HEK293 (cell line): ENCODE measurements at regions of chr2 and their contacts with region 1.

Region 1: DNA sequence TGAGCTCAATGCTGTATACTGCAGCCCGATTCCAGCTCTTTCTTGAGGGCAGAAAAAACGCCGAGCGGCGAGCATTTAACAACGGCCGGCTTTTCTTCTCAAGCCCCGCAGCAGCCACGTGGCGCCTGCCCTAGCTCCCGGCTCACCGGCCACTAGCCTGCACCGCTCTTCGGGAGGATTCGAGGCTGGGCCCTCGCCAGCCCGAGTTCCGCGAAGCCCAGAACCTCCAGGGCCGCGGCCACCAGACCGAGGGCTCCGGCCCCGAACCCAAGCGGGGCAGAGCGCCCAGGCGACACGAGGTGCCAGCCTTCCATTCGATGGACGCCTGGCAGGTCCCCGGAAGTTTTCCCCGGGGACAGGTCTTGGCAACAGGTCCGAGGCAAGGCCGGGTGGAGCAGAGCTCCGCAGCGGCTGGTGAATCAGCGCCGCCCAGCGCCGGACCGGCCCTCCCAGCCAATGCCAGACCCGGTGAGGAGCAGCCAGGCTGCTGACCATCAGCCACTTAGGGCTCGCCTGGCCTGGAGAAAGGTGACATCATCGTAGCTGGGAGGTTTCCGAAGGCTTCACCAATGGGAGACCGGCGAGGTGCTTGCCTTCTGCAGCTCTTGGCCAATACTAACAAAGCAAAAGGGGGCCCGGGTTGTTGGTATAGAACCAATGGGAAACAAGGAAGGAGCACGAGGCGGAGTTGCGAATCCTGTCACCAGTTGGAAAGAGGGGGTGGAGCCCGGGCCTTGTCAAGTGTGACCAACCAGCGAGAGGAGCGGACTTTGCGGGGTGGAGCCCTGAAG is 544 bp upstream of the MXD1 start:
- H3K4me3 ChIP-seq: peak overlapping the region; percentile 61
- H3K27ac ChIP-seq: peak overlapping the region; percentile 91
- H3K4me1 ChIP-seq: no peaks in the 10 kb centered on the region
- CTCF ChIP-seq: peak; percentile 80

Region 2: GRCh38 chr2:69893684-69894551 is 20.4 kb before region 1 on chr2 and contains the start of gene SNRNP27:
- CTCF ChIA-PET with region 1: interaction called, 9 read pairs
- POLR2A ChIA-PET with region 1: interaction called, 16 read pairs
- H3K4me3 ChIP-seq: peak within 1 kb of the TSS; percentile 84
- H3K27ac ChIP-seq: peak within 1 kb of the TSS; percentile 42
- H3K4me1 ChIP-seq: peaks cover 3% of the 10 kb centered on the region; the same call in 1 of the 2 replicates
- CTCF ChIP-seq: no peak

Region 3: GRCh38 chr2:69980408-69980807 is 66.0 kb after region 1 on chr2:
- CTCF ChIA-PET with region 1: no interaction called
- POLR2A ChIA-PET with region 1: no interaction called
- H3K4me3 ChIP-seq: no peak overlapping the region
- H3K27ac ChIP-seq: no peak overlapping the region
- H3K4me1 ChIP-seq: no peaks in the 10 kb centered on the region
- CTCF ChIP-seq: no peak

Region 4: DNA sequence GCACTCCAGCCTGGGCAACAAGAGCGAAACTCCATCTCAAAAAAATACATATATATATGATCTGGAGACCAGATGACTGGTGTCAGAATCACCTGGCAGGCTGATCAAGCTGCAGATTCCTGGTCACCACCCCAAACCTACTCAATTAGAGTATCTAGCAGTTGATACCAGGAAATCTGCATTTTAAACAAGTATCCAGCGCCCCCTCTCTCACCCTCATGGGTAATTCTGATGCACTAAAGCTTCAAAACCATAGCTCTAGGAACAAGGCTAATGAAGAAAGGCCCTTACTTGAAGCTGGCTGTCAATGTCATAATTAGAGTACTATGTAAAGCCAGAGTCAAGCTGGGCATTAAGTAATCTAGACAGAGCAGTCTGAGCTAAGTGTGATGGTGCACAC is 147.9 kb after region 1 on chr2:
- CTCF ChIA-PET with region 1: interaction called, 4 read pairs
- POLR2A ChIA-PET with region 1: interaction called, 11 read pairs
- H3K4me3 ChIP-seq: no peak overlapping the region
- H3K27ac ChIP-seq: no peak overlapping the region
- H3K4me1 ChIP-seq: no peaks in the 10 kb centered on the region
- CTCF ChIP-seq: no peak

Region 5: GRCh38 chr2:70080610-70081200 is 166.3 kb after region 1 on chr2:
- CTCF ChIA-PET with region 1: interaction called, 3 read pairs
- POLR2A ChIA-PET with region 1: interaction called, 56 read pairs
- H3K4me3 ChIP-seq: no peak overlapping the region
- H3K27ac ChIP-seq: no peak overlapping the region
- H3K4me1 ChIP-seq: peaks cover 6% of the 10 kb centered on the region
- CTCF ChIP-seq: no peak

Region 6: GRCh38 chr2:70104231-70105111 is 190.1 kb after region 1 on chr2:
- CTCF ChIA-PET with region 1: no interaction called
- POLR2A ChIA-PET with region 1: interaction called, 14 read pairs
- H3K4me3 ChIP-seq: no peak overlapping the region
- H3K27ac ChIP-seq: peak overlapping the region; percentile 56; the same call in 1 of the 2 replicates
- H3K4me1 ChIP-seq: peaks cover 10% of the 10 kb centered on the region
- CTCF ChIP-seq: no peak

Region 7: DNA sequence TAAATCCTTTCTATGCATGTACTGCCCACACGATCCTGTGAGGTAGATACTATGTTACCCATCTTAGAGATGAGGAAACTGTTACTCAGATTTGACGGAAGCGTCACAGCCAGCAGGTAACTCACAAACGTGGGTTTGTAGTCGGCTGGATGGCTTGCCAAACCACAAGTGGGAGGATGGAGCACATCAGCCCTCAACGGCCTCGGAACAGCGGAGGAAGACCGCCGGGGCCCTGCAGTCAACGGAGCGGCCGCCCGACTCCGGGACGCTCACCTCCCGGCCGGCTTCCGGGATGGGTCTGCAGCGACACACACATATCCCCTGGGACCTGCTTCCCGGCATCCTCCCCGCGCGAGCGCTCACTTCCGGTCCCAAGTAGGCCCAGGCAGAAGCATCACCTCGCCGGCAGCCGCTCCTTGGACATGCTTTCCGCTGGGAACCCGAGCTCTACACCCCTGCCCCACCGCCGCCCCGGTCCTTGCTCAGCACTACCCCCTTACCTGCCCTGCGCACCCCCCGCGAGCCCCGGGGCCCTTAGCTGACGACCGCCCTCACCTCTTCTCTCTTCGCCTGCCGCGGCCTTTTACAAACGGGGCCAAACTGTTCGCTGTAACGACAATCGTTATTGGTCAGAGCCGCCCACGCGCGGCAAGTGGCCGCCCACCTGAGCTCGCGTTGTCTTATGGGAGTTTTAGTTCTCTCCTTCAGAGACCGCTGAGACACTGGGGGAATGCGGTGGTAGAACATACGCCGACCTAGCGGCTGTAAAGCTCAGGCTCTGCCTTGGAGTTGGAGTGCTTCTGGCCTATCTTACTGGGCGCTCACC is 276.3 kb after region 1 on chr2 and contains the start of gene C2orf42:
- CTCF ChIA-PET with region 1: interaction called, 5 read pairs
- POLR2A ChIA-PET with region 1: interaction called, 45 read pairs
- H3K4me3 ChIP-seq: peak within 1 kb of the TSS; percentile 98
- H3K27ac ChIP-seq: peak within 1 kb of the TSS; percentile 90
- H3K4me1 ChIP-seq: no peaks in the 10 kb centered on the region; the same call in 1 of the 2 replicates
- CTCF ChIP-seq: 0 out of 2 replicates have a peak, but pooled peaks have one; percentile 13

Region 8: GRCh38 chr2:70301344-70302194 is 387.2 kb after region 1 on chr2 and contains the start of gene FAM136A:
- CTCF ChIA-PET with region 1: interaction called, 43 read pairs
- POLR2A ChIA-PET with region 1: interaction called, 10 read pairs
- H3K4me3 ChIP-seq: peak within 1 kb of the TSS; percentile 65
- H3K27ac ChIP-seq: peak within 1 kb of the TSS; percentile 88
- H3K4me1 ChIP-seq: peaks cover 6% of the 10 kb centered on the region; the same call in 1 of the 2 replicates
- CTCF ChIP-seq: peak; percentile 90